ENCODE measurements at regions of chr13 and their contacts with region 1.

Region 1: DNA sequence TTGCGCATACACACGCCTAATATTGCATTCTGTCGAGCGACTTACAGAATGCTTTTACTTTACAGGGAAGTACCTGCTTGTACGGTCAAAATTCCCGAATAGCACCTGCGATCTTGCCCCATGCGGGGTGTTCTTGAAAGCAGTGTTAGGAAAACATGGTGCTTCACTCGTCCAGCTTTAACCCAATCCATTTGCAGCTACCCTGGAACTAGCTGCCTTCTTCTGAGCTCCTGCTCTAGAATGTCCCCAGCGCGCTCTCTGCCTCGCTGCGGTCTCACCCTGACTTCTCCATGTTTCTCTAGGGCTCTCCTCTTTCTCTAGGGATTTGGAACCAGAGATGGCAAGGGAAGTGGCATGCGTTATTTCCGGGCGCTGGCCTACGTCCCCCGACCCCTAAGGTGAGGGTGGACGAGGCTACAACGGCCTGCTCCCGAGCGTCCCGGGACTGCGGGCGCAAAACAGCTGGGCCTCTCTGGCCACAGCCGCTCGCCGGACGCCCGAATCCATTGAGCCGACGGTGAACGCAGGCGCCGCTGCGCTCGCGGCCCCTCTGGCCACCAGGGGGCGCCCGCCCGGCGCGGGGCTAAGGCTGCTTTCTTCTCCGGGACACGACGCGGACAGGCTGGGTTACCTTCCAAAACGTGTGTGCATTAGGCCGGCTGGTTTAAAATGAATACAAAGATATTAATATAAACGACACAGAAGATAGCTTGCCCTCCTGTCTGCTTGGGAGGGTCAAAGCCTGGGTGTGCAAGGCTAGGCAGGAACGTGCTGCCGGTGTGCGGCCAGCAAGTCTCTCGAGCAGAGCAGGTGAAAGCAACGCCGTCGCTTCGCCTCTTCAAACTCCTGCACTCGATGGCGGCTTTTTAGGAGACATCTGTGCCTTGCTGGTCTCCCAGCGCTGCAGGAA is 1.8 kb upstream of the SPRY2 start:
- DNase-seq: no peak
- ATAC-seq: peak; percentile 51
- H3K4me3 ChIP-seq: peak overlapping the region; percentile 43; the same call in 1 of the 2 replicates
- H3K27ac ChIP-seq: no peak overlapping the region
- H3K4me1 ChIP-seq: no peaks in the 10 kb centered on the region
- H3K27me3 ChIP-seq: no peaks in the 10 kb centered on the region; a peak in 1 of 4 replicates
- CTCF ChIP-seq: peak; percentile 91 to 95 (median 94)
- EP300 ChIP-seq: no peak
- POLR2A ChIP-seq: no peak
- RAD21 ChIP-seq: peak; percentile 83

Region 2: GRCh38 chr13:79812070-79812850 is 530.5 kb before region 1 on chr13:
- CTCF ChIA-PET with region 1: interaction called, 5 read pairs
- POLR2A ChIA-PET with region 1: interaction called, 3 read pairs
- RAD21 ChIA-PET with region 1: interaction called, 12 read pairs
- SMC1A ChIA-PET with region 1: interaction called, 7 read pairs
- in situ Hi-C with region 1: no loop called
- intact Hi-C with region 1: no loop called
- DNase-seq: peak; percentile 39
- ATAC-seq: peak; percentile 90
- H3K4me3 ChIP-seq: no peak overlapping the region
- H3K27ac ChIP-seq: peak overlapping the region; percentile 44
- H3K4me1 ChIP-seq: peaks cover 4% of the 10 kb centered on the region
- H3K27me3 ChIP-seq: no peaks in the 10 kb centered on the region
- CTCF ChIP-seq: no peak
- EP300 ChIP-seq: peak in 1 of 2 experiments; percentile 79; a peak in 2 of 4 replicates
- POLR2A ChIP-seq: no peak
- RAD21 ChIP-seq: no peak

Region 3: DNA sequence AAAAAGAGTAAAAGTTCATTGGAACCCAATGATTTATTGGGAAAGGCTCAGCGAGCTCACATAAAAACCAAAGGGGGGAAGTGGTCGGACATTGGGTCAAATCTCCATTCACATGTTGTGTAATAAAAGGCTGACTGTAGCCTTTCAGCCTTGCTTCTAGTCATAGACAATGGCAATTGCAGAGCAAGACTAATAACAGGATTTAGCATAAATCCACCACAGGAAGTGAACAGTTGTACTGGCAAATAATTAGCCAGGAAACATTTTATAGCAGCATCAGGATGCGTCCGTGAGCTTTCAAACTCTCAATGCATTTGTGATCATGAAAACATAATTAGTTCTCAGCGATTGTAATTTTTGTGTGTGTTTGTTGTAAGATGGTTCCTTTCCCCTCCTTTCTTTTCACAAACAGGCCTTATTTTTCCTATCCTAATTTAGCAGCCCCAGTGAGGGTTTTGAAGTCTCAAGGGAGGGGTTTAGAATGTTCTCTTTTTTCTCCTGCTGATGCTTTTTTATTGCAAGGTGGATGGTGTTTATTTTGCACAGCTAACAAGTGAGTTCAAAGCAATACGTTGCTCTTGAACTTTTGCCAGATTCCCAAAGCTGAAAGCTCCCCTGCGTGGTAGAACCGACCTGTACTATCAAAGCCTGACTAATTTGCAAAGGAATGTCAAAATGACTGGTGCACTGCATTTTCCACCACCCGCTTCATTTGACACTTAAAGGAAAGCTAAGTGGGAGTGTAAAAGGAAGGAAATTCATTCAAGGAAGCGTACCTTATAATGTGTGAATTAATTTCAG is 107.4 kb before region 1 on chr13:
- CTCF ChIA-PET with region 1: no interaction called
- POLR2A ChIA-PET with region 1: interaction called, 3 read pairs
- RAD21 ChIA-PET with region 1: interaction called, 6 read pairs
- SMC1A ChIA-PET with region 1: interaction called, 3 read pairs
- in situ Hi-C with region 1: no loop called
- intact Hi-C with region 1: loop called (anchors 2 kb)
- DNase-seq: no peak
- ATAC-seq: peak; percentile 89
- H3K4me3 ChIP-seq: no peak overlapping the region
- H3K27ac ChIP-seq: no peak overlapping the region
- H3K4me1 ChIP-seq: no peaks in the 10 kb centered on the region
- H3K27me3 ChIP-seq: no peaks in the 10 kb centered on the region
- CTCF ChIP-seq: no peak
- EP300 ChIP-seq: peak in 1 of 2 experiments; percentile 64; a peak in 1 of 4 replicates
- POLR2A ChIP-seq: no peak
- RAD21 ChIP-seq: no peak

Region 4: DNA sequence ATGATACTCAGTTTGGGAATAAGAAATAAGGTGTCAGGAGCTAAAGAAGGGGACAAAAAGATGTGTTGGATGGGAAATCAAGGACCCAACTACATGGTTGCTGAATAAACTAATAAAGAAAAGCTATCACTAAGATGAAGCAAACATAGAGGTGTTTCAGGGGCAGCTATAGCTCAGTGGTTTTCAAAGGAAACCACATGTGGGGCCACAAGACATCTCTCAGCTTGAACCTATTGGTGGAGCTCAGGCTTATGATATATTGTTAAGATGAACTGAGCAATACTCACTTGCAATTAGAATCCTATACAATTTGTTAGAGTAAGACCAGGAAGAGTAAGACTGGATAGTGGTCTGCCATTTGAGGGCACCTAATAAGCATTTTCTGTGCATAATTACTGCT is 43.3 kb after region 1 on chr13:
- CTCF ChIA-PET with region 1: interaction called, 5 read pairs
- POLR2A ChIA-PET with region 1: no interaction called
- RAD21 ChIA-PET with region 1: interaction called, 3 read pairs
- SMC1A ChIA-PET with region 1: interaction called, 11 read pairs
- in situ Hi-C with region 1: no loop called
- intact Hi-C with region 1: no loop called
- DNase-seq: no peak
- ATAC-seq: peak; percentile 91
- H3K4me3 ChIP-seq: no peak overlapping the region
- H3K27ac ChIP-seq: no peak overlapping the region
- H3K4me1 ChIP-seq: no peaks in the 10 kb centered on the region
- H3K27me3 ChIP-seq: no peaks in the 10 kb centered on the region
- CTCF ChIP-seq: no peak
- EP300 ChIP-seq: no peak
- POLR2A ChIP-seq: no peak
- RAD21 ChIP-seq: 0 out of 2 replicates have a peak, but pooled peaks have one; percentile 14

Region 5: GRCh38 chr13:80444240-80445015 is 101.7 kb after region 1 on chr13:
- CTCF ChIA-PET with region 1: interaction called, 14 read pairs
- POLR2A ChIA-PET with region 1: interaction called, 3 read pairs
- RAD21 ChIA-PET with region 1: interaction called, 8 read pairs
- SMC1A ChIA-PET with region 1: interaction called, 8 read pairs
- in situ Hi-C with region 1: no loop called
- intact Hi-C with region 1: no loop called
- DNase-seq: no peak
- ATAC-seq: peak; percentile 51
- H3K4me3 ChIP-seq: no peak overlapping the region
- H3K27ac ChIP-seq: no peak overlapping the region
- H3K4me1 ChIP-seq: no peaks in the 10 kb centered on the region
- H3K27me3 ChIP-seq: no peaks in the 10 kb centered on the region
- CTCF ChIP-seq: no peak
- EP300 ChIP-seq: no peak
- POLR2A ChIP-seq: no peak
- RAD21 ChIP-seq: no peak

Region 6: GRCh38 chr13:80923907-80924306 is 581.2 kb after region 1 on chr13:
- CTCF ChIA-PET with region 1: interaction called, 15 read pairs
- POLR2A ChIA-PET with region 1: no interaction called
- RAD21 ChIA-PET with region 1: interaction called, 6 read pairs
- SMC1A ChIA-PET with region 1: interaction called, 10 read pairs
- in situ Hi-C with region 1: no loop called
- intact Hi-C with region 1: loop called (anchors 5 kb)
- DNase-seq: no peak
- ATAC-seq: peak; percentile 55; the same call in 2 of the 3 replicates
- H3K4me3 ChIP-seq: no peak overlapping the region
- H3K27ac ChIP-seq: no peak overlapping the region
- H3K4me1 ChIP-seq: no peaks in the 10 kb centered on the region
- H3K27me3 ChIP-seq: no peaks in the 10 kb centered on the region
- CTCF ChIP-seq: peak in 1 of 3 experiments; percentile 39; a peak in 1 of 6 replicates
- EP300 ChIP-seq: no peak
- POLR2A ChIP-seq: no peak
- RAD21 ChIP-seq: peak; percentile 35; the same call in 1 of the 2 replicates